Activated CD4-positive, alpha-beta T cell treated with anti-CD3 and anti-CD28 coated beads, Interleukin-2, amount 10 ng/mL, durations not matched to agents 24 days and 14 days (primary cell): ENCODE measurements at regions of chr5 and their contacts with region 1.

Region 1: DNA sequence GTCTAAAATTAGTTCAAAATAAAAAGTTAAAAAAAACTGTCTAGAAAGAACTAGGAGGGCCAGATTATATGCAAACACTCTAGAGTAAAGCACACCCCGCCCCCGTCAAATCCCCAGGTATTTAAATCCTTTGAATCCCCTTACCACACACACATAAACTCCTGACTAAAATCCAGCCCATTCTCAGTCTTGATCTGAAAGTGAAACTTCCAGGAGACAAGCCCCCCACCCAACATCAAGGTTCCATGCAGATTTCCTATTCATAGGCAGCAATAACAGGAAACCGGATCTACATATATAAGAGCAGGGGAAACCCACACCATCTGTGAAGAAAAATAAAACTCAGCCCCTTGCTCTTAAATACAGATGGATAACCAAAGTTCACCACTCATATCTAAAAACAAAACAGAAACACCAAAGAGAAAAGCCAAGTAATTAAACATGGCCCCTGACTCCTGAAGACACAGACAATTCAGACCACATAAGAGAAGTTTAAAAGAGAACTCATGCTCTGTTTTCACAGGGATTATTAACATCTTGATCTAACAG is 42.3 kb downstream of the MARCHF3 start:
- DNase-seq: peak; percentile 80
- H3K4me3 Mint-ChIP-seq: peak overlapping the region; percentile 60
- H3K27ac Mint-ChIP-seq: peak overlapping the region; percentile 87
- H3K4me1 Mint-ChIP-seq: peaks cover 19% of the 10 kb centered on the region
- H3K27me3 Mint-ChIP-seq: no peaks in the 10 kb centered on the region

Region 2: DNA sequence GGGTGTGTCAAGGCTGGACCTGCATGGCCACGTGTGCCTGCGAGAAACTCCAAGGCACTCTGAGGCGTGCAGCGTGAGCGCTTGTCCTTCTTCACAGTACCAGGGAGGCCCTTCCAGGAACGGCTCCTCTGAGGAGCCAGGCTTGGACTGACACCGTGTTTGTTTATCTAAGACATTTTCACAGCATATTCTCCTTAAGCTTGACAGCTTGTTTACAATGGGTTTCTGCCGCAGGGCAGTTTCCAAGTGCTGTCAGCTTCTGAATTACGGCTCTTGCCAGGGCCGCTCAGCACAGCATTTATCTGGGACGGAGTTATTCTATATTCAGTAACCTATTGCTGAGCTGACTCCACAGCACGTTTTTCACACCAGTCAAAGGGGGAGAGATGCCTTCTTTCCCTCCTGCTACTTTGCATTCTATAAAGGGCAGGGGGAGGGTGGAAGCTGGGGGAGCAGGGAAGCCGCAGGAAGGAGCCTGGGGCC is 112.8 kb before region 1 on chr5:
- intact Hi-C with region 1: no loop called
- DNase-seq: no peak
- H3K4me3 Mint-ChIP-seq: no peak overlapping the region
- H3K27ac Mint-ChIP-seq: no peak overlapping the region
- H3K4me1 Mint-ChIP-seq: no peaks in the 10 kb centered on the region
- H3K27me3 Mint-ChIP-seq: no peaks in the 10 kb centered on the region

Region 3: DNA sequence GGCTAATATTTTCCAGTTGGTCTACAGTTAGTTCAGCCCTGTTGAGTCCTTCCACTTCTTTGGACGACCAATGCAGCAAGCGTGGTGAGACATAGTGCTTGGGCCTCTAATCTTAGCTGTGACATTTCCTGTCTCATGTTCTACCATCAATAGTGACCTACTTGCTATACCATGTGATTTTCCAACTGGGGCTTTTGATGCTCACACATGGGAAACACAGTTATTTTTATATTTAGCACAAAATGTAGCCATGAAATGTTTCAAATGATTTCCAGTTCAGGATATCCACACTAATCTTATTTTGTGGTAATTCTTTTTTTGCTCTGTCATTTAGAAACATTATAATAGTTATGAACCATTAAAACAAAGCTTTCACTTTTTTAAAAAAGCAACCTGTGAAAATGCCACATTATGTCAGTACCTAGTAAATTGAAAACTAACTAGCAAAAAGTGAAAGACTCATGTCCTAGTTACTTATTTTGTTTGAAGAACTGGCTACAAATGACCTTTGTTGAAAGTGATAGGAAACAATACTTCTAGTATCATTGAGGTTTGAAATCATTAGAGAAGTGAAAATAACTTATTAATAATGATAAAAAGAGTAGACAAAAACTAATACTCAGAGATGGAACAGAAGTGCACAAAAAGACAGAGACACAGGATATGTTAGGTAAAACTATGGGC is 24.0 kb after region 1 on chr5:
- intact Hi-C with region 1: loop called (anchors 1 kb)
- DNase-seq: no peak
- H3K4me3 Mint-ChIP-seq: no peak overlapping the region
- H3K27ac Mint-ChIP-seq: no peak overlapping the region
- H3K4me1 Mint-ChIP-seq: peaks cover 4% of the 10 kb centered on the region
- H3K27me3 Mint-ChIP-seq: no peaks in the 10 kb centered on the region